Lower leg skin (tissue), 4 donors: ENCODE measurements at regions of chr2 and their contacts with region 1.

Region 1: GRCh38 chr2:190649798-190650390 is 1.0 kb downstream of the NAB1 start:
- DNase-seq: no peak
- H3K4me3 ChIP-seq: peak overlapping the region; percentile 89
- CTCF ChIP-seq: no peak
- POLR2A ChIP-seq: no peak

Region 2: GRCh38 chr2:190408538-190409271 is 241.2 kb before region 1 on chr2:
- intact Hi-C with region 1: loop called (anchors 10 kb)
- DNase-seq: peak; percentile 37 to 89
- H3K4me3 ChIP-seq: peak overlapping the region; percentile 68
- CTCF ChIP-seq: no peak
- POLR2A ChIP-seq: no peak

Region 3: DNA sequence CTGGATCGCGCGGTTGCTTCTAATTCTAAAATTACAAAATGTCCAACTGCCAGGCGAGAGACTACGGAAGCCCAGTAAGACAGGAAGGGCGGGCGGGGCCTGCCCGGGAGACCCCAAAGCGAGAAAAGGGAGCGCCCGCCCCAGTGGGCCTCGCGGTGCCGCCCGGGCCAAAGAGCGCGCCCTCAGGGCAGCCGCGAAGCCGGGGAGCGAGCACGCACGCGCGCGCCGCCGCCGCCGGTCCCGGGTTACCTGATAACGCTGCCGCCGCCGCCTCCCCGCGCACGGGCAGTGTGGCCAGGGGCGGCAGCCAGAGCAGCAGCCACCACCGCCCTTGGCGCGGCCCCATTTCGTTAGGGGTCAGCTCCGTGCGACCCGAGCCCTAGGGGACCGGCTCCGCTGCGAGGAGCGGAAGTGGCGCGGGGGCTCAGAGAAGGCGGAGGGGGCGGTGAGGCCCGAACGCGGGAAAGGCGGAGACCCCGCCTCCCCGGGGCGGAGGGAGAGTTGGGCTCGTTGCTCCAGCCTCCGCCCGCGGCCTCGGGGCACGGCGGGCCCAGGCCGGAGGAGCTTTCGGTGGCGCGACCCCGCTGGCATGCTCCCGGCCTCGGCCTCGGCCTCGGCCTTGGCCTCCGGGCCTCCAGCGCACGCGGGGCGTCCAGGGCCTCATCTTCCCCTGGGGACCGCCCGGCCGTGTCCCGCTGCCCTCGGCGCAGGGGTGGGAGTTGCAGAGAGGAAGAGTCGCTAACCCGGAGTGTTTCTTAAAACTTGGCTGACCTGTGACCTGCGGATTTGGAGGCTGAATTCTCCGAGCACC is 115.4 kb before region 1 on chr2 and contains the start of gene NEMP2:
- intact Hi-C with region 1: loop called (anchors 10 kb)
- DNase-seq: peak; percentile 53 to 94
- H3K4me3 ChIP-seq: peak within 1 kb of the TSS; percentile 62
- CTCF ChIP-seq: no peak
- POLR2A ChIP-seq: no peak
- total RNA-seq, gene NEMP2: 1.1 to 1.7 (median 1.6) TPM

Region 4: GRCh38 chr2:190674966-190675650 is 25.2 kb after region 1 on chr2:
- intact Hi-C with region 1: no loop called
- DNase-seq: no peak
- H3K4me3 ChIP-seq: no peak overlapping the region
- CTCF ChIP-seq: no peak
- POLR2A ChIP-seq: no peak